ENCODE measurements at regions of chr11 and their contacts with region 1.

Region 1: DNA sequence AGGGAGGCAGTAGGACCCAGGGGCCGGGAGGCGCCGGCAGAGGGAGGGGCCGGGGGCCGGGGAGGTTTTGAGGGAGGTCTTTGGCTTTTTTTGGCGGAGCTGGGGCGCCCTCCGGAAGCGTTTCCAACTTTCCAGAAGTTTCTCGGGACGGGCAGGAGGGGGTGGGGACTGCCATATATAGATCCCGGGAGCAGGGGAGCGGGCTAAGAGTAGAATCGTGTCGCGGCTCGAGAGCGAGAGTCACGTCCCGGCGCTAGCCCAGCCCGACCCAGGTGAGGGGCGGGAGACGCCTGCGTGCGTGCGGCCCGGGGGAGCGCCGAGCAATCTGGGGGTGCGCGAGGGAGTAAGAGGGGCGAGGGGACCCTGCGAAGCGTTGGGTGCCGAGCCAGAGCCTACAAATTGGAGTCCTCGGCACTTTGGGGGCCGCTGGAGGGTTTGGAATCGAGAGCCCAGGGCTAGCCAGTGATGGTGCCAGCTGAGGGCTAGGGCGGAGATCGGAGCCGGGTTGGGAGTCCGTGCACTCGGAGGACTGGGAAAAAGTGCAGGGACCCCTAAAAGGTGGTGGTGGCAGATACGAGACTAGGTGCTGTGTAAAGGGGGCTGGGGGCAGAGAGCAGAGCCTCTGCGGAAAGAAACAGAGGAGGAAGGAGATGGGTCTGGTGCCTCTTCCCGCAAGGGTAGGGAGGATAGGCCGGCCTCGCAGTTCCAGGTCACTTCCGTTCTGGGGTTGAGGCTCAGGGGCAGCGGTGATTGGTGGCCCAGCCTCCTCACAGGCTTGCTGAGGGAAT is at the start of gene SERPINH1:
- DNase-seq: peak; percentile 80
- ATAC-seq: peak; percentile 78
- H3K4me3 Mint-ChIP-seq: peak within 1 kb of the TSS; percentile 82
- H3K27ac Mint-ChIP-seq: peak within 1 kb of the TSS; percentile 87
- H3K4me1 Mint-ChIP-seq: peaks cover 39% of the 10 kb centered on the region
- H3K27me3 Mint-ChIP-seq: no peaks in the 10 kb centered on the region
- total RNA-seq, gene SERPINH1: 8.1 to 10.6 TPM

Region 2: DNA sequence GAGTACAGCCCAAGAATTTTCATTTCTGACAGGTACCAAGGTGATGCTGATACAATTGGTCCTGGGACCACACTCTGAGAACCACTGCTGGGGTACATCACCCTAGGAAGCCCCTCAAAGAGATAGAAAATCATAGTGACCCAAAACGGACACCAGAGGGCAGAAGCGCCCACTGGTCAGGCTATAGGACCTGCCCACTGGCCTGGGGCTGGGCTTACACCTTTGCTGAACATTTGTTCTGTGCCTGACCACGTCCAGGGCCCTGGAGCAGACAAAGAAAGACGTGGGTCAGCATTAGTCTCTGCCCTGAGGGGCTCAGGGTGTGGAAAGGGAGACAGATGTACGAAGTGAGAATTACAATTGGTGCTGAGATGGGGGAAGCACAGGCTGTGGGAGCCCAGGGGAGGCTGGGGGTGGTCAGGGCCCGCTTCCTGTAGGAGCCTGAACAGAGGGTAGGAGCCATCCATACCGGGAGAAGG is 14.6 kb before region 1 on chr11:
- CTCF ChIA-PET with region 1: interaction called, 12 read pairs
- DNase-seq: peak; percentile 56
- ATAC-seq: peak; percentile 67
- H3K4me3 Mint-ChIP-seq: no peak overlapping the region
- H3K27ac Mint-ChIP-seq: no peak overlapping the region
- H3K4me1 Mint-ChIP-seq: peaks cover 8% of the 10 kb centered on the region
- H3K27me3 Mint-ChIP-seq: peaks cover 11% of the 10 kb centered on the region

Region 3: DNA sequence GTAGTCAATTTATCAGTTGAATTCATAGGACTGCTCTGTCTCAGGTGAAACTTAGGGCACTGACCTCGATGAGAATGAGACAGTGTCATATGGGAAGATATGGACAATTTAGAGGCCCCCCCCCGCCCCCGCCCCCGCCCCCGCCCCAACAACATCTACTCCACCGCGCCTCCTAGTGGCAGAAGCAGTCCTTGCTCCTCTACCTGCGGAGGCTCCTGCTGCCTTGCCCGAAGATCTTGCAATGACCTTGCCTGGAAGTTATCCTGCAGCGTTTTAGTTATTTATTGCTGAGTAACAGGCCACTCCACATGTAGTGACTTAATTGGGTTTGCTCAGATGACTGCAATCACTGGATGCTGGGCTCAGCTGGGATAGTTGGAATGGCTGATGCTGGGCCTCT is 15.0 kb after region 1 on chr11:
- CTCF ChIA-PET with region 1: interaction called, 40 read pairs
- DNase-seq: peak; percentile 56
- ATAC-seq: no peak
- H3K4me3 Mint-ChIP-seq: no peak overlapping the region
- H3K27ac Mint-ChIP-seq: no peak overlapping the region
- H3K4me1 Mint-ChIP-seq: peaks cover 21% of the 10 kb centered on the region
- H3K27me3 Mint-ChIP-seq: peaks cover 7% of the 10 kb centered on the region

Measured in activated CD8-positive, alpha-beta memory T cell treated with anti-CD3 and anti-CD28 coated beads, Interleukin-2, amount 10 ng/mL, durations not matched to agents 7 days and 5 days (primary cell).